ENCODE measurements at regions of chr3 and their contacts with region 1.

Region 1: GRCh38 chr3:124565013-124565412 is 165.2 kb upstream of the UMPS start:
- DNase-seq: peak; percentile 66 to 76
- ATAC-seq: peak; percentile 55
- H3K4me3 ChIP-seq: no peak overlapping the region
- H3K27ac ChIP-seq: no peak overlapping the region
- H3K4me1 ChIP-seq: peaks cover 0 to 4% of the 10 kb centered on the region in 2 donors
- H3K27me3 ChIP-seq: no peaks in the 10 kb centered on the region

Region 2: GRCh38 chr3:124584552-124585391 is 19.8 kb after region 1 on chr3:
- intact Hi-C with region 1: no loop called
- DNase-seq: peak; percentile 83 to 92
- ATAC-seq: peak; percentile 85
- H3K4me3 ChIP-seq: peak overlapping the region in 1 of 2 donors; percentile 37
- H3K27ac ChIP-seq: no peak overlapping the region
- H3K4me1 ChIP-seq: peaks cover 0 to 2% of the 10 kb centered on the region in 2 donors
- H3K27me3 ChIP-seq: no peaks in the 10 kb centered on the region

Region 3: DNA sequence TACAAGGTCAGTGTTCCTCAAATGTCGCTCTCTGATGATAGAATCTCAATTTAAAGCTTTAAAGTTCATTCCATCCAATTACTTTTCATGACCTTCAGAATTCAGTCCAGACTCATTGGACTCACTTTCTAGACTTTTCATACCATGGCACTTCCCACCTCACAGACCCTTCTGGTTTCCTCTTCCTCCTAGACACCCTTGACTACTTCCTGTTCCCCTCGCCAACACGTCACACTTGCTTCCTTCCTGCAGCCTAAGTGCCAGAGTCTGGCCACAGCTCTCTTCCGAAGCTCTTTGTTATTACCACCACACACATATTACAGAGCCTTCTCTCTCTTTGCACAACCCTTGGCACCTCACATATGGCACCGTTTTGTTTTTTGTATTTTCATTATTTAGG is 106.1 kb after region 1 on chr3:
- intact Hi-C with region 1: loop called in 1 of 2 experiments (anchors 5 kb)
- DNase-seq: no peak
- ATAC-seq: no peak
- H3K4me3 ChIP-seq: no peak overlapping the region
- H3K27ac ChIP-seq: no peak overlapping the region
- H3K4me1 ChIP-seq: no peaks in the 10 kb centered on the region
- H3K27me3 ChIP-seq: no peaks in the 10 kb centered on the region

Region 4: GRCh38 chr3:124688581-124689454 is 123.8 kb after region 1 on chr3:
- intact Hi-C with region 1: loop called (anchors 1 to 2 kb)
- DNase-seq: peak; percentile 83 to 88
- ATAC-seq: peak; percentile 77
- H3K4me3 ChIP-seq: no peak overlapping the region
- H3K27ac ChIP-seq: no peak overlapping the region
- H3K4me1 ChIP-seq: no peaks in the 10 kb centered on the region
- H3K27me3 ChIP-seq: no peaks in the 10 kb centered on the region